Breast epithelium (tissue), 4 donors: ENCODE measurements at regions of chr5 and their contacts with region 1.

Region 1: GRCh38 chr5:154654486-154655371 is 100.4 kb upstream of the LARP1 start:
- DNase-seq: no peak
- H3K4me3 ChIP-seq: peak overlapping the region in 1 of 3 donors; percentile 0
- H3K27ac ChIP-seq: peak overlapping the region in 1 of 2 donors; percentile 48
- H3K4me1 ChIP-seq: peaks cover 0 to 5% of the 10 kb centered on the region in 2 donors
- H3K27me3 ChIP-seq: no peaks in the 10 kb centered on the region
- CTCF ChIP-seq: no peak
- POLR2A ChIP-seq: no peak

Region 2: DNA sequence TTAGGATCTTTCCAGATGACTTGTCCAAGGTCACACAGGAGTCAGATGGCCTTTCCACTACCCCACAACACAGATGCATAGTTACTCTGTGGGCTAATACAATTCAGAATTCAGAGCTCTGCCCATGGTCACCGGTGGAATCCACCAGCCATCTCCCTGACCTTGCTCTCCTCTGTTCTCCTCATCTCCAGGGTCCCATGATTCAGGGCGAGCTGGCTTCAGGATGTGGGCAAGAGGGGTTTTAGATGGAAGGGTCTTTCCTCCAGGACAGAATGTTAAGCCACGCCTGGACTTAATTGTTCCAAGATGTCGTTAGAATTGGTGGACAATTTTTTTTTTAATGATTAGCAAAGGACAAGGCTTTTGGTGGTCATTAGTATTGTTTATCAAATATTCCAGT is 18.8 kb after region 1 on chr5:
- intact Hi-C with region 1: no loop called
- DNase-seq: no peak
- H3K4me3 ChIP-seq: no peak overlapping the region
- H3K27ac ChIP-seq: no peak overlapping the region
- H3K4me1 ChIP-seq: no peaks in the 10 kb centered on the region
- H3K27me3 ChIP-seq: no peaks in the 10 kb centered on the region
- CTCF ChIP-seq: no peak
- POLR2A ChIP-seq: no peak

Region 3: GRCh38 chr5:154801083-154801482 is 146.4 kb after region 1 on chr5:
- intact Hi-C with region 1: loop called (anchors 10 kb)
- DNase-seq: no peak
- H3K4me3 ChIP-seq: no peak overlapping the region
- H3K27ac ChIP-seq: no peak overlapping the region
- H3K4me1 ChIP-seq: no peaks in the 10 kb centered on the region
- H3K27me3 ChIP-seq: no peaks in the 10 kb centered on the region
- CTCF ChIP-seq: no peak
- POLR2A ChIP-seq: no peak

Region 4: GRCh38 chr5:155017610-155018009 is 362.9 kb after region 1 on chr5:
- intact Hi-C with region 1: no loop called
- DNase-seq: no peak
- H3K4me3 ChIP-seq: no peak overlapping the region
- H3K27ac ChIP-seq: no peak overlapping the region
- H3K4me1 ChIP-seq: no peaks in the 10 kb centered on the region
- H3K27me3 ChIP-seq: no peaks in the 10 kb centered on the region
- CTCF ChIP-seq: no peak
- POLR2A ChIP-seq: no peak